OCI-LY7 (cell line): ENCODE measurements at regions of chr1 and their contacts with region 1.

Region 1: GRCh38 chr1:77594366-77595112 is 87.9 kb downstream of the ZZZ3 start:
- DNase-seq: no peak
- H3K4me3 ChIP-seq: no peak overlapping the region
- H3K27ac ChIP-seq: no peak overlapping the region
- H3K4me1 ChIP-seq: no peaks in the 10 kb centered on the region
- CTCF ChIP-seq: no peak

Region 2: GRCh38 chr1:77253211-77253610 is 341.3 kb before region 1 on chr1:
- CTCF ChIA-PET with region 1: no interaction called
- POLR2A ChIA-PET with region 1: no interaction called
- intact Hi-C with region 1: no loop called
- DNase-seq: no peak
- H3K4me3 ChIP-seq: no peak overlapping the region
- H3K27ac ChIP-seq: no peak overlapping the region
- H3K4me1 ChIP-seq: no peaks in the 10 kb centered on the region
- CTCF ChIP-seq: no peak

Region 3: GRCh38 chr1:77271852-77272580 is 322.5 kb before region 1 on chr1:
- CTCF ChIA-PET with region 1: no interaction called
- POLR2A ChIA-PET with region 1: interaction called, 10 read pairs
- intact Hi-C with region 1: no loop called
- DNase-seq: no peak
- H3K4me3 ChIP-seq: no peak overlapping the region
- H3K27ac ChIP-seq: no peak overlapping the region
- H3K4me1 ChIP-seq: no peaks in the 10 kb centered on the region
- CTCF ChIP-seq: no peak

Region 4: GRCh38 chr1:77582905-77583304 is 11.6 kb before region 1 on chr1:
- CTCF ChIA-PET with region 1: no interaction called
- POLR2A ChIA-PET with region 1: interaction called, 13 read pairs
- intact Hi-C with region 1: no loop called
- DNase-seq: no peak
- H3K4me3 ChIP-seq: no peak overlapping the region
- H3K27ac ChIP-seq: no peak overlapping the region
- H3K4me1 ChIP-seq: peaks cover 10% of the 10 kb centered on the region
- CTCF ChIP-seq: no peak

Region 5: GRCh38 chr1:77680173-77680572 is 85.6 kb after region 1 on chr1:
- CTCF ChIA-PET with region 1: no interaction called
- POLR2A ChIA-PET with region 1: no interaction called
- intact Hi-C with region 1: no loop called
- DNase-seq: no peak
- H3K4me3 ChIP-seq: peak overlapping the region; percentile 98
- H3K27ac ChIP-seq: no peak overlapping the region
- H3K4me1 ChIP-seq: peaks cover 60% of the 10 kb centered on the region
- CTCF ChIP-seq: no peak